ENCODE measurements at regions of chr12 and their contacts with region 1.

Region 1: GRCh38 chr12:53984901-53985709 is at the start of gene HOXC10:
- DNase-seq: peak in 13 of 14 experiments; percentile 33 to 84 (median 64)
- ATAC-seq: peak; percentile 62
- H3K4me3 ChIP-seq: peak within 1 kb of the TSS; percentile 4
- H3K4me3 Mint-ChIP-seq: peak within 1 kb of the TSS; percentile 82
- H3K27ac ChIP-seq: no peak within 1 kb of the TSS
- H3K27ac Mint-ChIP-seq: peak within 1 kb of the TSS; percentile 47
- H3K4me1 ChIP-seq: peaks cover 45% of the 10 kb centered on the region
- H3K4me1 Mint-ChIP-seq: peaks cover 28% of the 10 kb centered on the region
- H3K27me3 ChIP-seq: peaks cover 89 to 98% of the 10 kb centered on the region in 2 experiments
- H3K27me3 Mint-ChIP-seq: peaks cover 95% of the 10 kb centered on the region
- CTCF ChIP-seq: no peak
- total RNA-seq, gene HOXC10: not detected

Region 2: GRCh38 chr12:53791735-53792326 is 193.3 kb before region 1 on chr12:
- CTCF ChIA-PET with region 1: no interaction called
- POLR2A ChIA-PET with region 1: no interaction called
- intact Hi-C with region 1: loop called (anchors 2 to 5 kb)
- DNase-seq: peak in 13 of 14 experiments; percentile 3 to 62 (median 20)
- ATAC-seq: no peak
- H3K4me3 ChIP-seq: no peak overlapping the region
- H3K4me3 Mint-ChIP-seq: no peak overlapping the region
- H3K27ac ChIP-seq: no peak overlapping the region
- H3K27ac Mint-ChIP-seq: no peak overlapping the region
- H3K4me1 ChIP-seq: peaks cover 3% of the 10 kb centered on the region
- H3K4me1 Mint-ChIP-seq: no peaks in the 10 kb centered on the region
- H3K27me3 ChIP-seq: peaks cover 20 to 32% of the 10 kb centered on the region in 2 experiments
- H3K27me3 Mint-ChIP-seq: peaks cover 38% of the 10 kb centered on the region
- CTCF ChIP-seq: peak; percentile 69

Region 3: DNA sequence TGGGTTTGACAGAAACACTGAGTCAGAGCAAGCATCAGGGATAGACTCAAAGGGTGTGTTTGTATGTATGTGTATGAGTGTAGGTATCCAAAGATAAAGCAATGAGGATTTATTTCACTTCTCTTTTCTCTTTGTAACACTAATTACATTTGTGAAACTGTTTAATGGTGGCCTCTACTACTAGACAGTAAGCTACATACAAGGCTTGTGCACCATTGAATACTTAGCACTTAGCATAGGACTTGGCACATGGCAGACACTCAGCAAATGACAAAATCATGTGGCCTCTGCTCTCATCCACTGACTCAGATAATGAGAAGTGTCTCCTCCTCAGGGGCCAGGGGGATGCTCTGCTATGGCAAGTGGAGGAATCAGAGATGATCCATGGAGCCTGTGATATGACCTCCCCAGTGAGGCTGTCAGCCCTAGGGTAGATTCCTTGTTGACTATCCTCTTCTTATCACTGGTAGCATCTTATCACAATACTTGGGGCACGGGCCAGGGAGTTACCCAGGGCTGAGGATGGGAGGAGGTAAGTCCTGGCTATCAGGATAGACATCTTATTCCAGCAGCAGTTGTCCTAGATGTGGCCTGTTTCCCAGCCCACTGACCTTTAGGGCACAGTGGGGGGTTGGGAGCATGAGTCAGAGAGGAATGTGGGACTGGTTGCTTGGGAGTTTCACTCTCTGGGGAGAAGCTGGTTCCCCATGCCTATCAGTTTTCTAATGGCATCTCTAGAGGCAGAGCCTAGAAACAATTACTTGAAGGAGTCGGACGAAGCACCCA is 117.7 kb before region 1 on chr12:
- CTCF ChIA-PET with region 1: no interaction called
- POLR2A ChIA-PET with region 1: no interaction called
- intact Hi-C with region 1: no loop called
- DNase-seq: no peak
- ATAC-seq: no peak
- H3K4me3 ChIP-seq: no peak overlapping the region
- H3K4me3 Mint-ChIP-seq: no peak overlapping the region
- H3K27ac ChIP-seq: no peak overlapping the region
- H3K27ac Mint-ChIP-seq: no peak overlapping the region
- H3K4me1 ChIP-seq: no peaks in the 10 kb centered on the region
- H3K4me1 Mint-ChIP-seq: no peaks in the 10 kb centered on the region
- H3K27me3 ChIP-seq: peaks cover 0 to 42% of the 10 kb centered on the region in 2 experiments
- H3K27me3 Mint-ChIP-seq: peaks cover 45% of the 10 kb centered on the region
- CTCF ChIP-seq: no peak

Region 4: GRCh38 chr12:53952871-53953734 is 32.0 kb before region 1 on chr12:
- CTCF ChIA-PET with region 1: no interaction called
- POLR2A ChIA-PET with region 1: no interaction called
- intact Hi-C with region 1: loop called in 1 of 2 experiments (anchors 5 kb)
- DNase-seq: no peak
- ATAC-seq: no peak
- H3K4me3 ChIP-seq: no peak overlapping the region
- H3K4me3 Mint-ChIP-seq: peak overlapping the region; percentile 36
- H3K27ac ChIP-seq: no peak overlapping the region
- H3K27ac Mint-ChIP-seq: peak overlapping the region; percentile 49
- H3K4me1 ChIP-seq: peaks cover 49% of the 10 kb centered on the region
- H3K4me1 Mint-ChIP-seq: peaks cover 33% of the 10 kb centered on the region
- H3K27me3 ChIP-seq: peaks cover 97 to 99% of the 10 kb centered on the region in 2 experiments
- H3K27me3 Mint-ChIP-seq: peaks cover 95% of the 10 kb centered on the region
- CTCF ChIP-seq: no peak

Region 5: DNA sequence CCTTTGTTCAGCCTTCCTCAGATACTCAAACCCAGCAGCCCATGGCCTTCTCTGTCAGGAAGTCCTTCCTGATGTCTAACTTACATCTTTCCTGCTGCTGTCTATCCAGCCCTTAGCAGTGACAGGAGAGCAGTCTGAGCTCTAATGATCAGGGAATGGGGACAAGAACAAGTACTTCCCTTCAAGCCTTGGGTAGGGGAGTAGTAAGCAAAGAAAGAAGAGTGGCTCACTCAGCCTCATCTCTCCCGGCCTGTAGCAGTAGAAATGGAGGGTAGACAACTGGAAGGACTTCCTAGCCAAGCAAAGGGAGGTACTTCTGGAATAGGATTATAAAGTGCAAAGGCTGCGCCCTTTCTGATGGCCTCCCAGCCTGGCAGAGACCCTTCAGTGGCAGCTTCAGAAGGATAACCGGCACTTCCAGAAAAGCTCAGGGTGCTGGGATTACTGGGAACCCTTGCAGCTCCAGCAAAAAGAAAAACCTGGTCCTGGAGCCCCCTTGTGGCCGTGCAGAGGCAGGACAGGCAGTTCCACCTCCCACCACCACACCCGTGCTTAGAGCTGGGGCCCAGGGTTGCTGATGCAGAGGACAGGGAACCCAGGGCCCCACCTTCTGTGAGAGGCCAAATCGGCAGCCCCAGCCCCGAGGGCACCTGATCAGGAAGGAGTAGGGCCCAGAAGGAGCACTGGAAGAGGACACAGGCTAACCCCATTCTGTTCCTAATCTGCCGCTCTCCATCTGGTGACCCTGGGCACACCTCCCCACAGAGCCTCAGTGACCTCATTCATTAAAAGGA is 216.1 kb after region 1 on chr12:
- CTCF ChIA-PET with region 1: interaction called, 10 read pairs
- POLR2A ChIA-PET with region 1: no interaction called
- intact Hi-C with region 1: loop called in 1 of 2 experiments (anchors 1 kb)
- DNase-seq: peak; percentile 46 to 83 (median 57)
- ATAC-seq: peak; percentile 98
- H3K4me3 ChIP-seq: no peak overlapping the region
- H3K4me3 Mint-ChIP-seq: no peak overlapping the region
- H3K27ac ChIP-seq: no peak overlapping the region
- H3K27ac Mint-ChIP-seq: no peak overlapping the region
- H3K4me1 ChIP-seq: peaks cover 5% of the 10 kb centered on the region
- H3K4me1 Mint-ChIP-seq: no peaks in the 10 kb centered on the region
- H3K27me3 ChIP-seq: peaks cover 50 to 61% of the 10 kb centered on the region in 2 experiments
- H3K27me3 Mint-ChIP-seq: peaks cover 89% of the 10 kb centered on the region
- CTCF ChIP-seq: peak; percentile 92

Region 6: GRCh38 chr12:54207484-54208294 is 222.6 kb after region 1 on chr12:
- CTCF ChIA-PET with region 1: interaction called, 11 read pairs
- POLR2A ChIA-PET with region 1: no interaction called
- intact Hi-C with region 1: no loop called
- DNase-seq: peak; percentile 59 to 84 (median 72)
- ATAC-seq: peak; percentile 96
- H3K4me3 ChIP-seq: no peak overlapping the region
- H3K4me3 Mint-ChIP-seq: no peak overlapping the region
- H3K27ac ChIP-seq: no peak overlapping the region
- H3K27ac Mint-ChIP-seq: no peak overlapping the region
- H3K4me1 ChIP-seq: peaks cover 7% of the 10 kb centered on the region
- H3K4me1 Mint-ChIP-seq: no peaks in the 10 kb centered on the region
- H3K27me3 ChIP-seq: peaks cover 13 to 31% of the 10 kb centered on the region in 2 experiments
- H3K27me3 Mint-ChIP-seq: peaks cover 53% of the 10 kb centered on the region
- CTCF ChIP-seq: peak; percentile 92

Measured in CD4-positive, alpha-beta T cell (primary cell).